Ascending aorta (tissue), 2 donors: ENCODE measurements at regions of chr9 and their contacts with region 1.

Region 1: GRCh38 chr9:121650217-121651007 is 1.0 kb upstream of the DAB2IP start:
- DNase-seq: no peak
- H3K4me3 ChIP-seq: peak overlapping the region in 1 of 2 donors; percentile 88
- H3K27ac ChIP-seq: peak overlapping the region; percentile 16 to 56
- H3K4me1 ChIP-seq: peaks cover 15 to 17% of the 10 kb centered on the region in 2 donors
- H3K27me3 ChIP-seq: no peaks in the 10 kb centered on the region
- CTCF ChIP-seq: no peak

Region 2: GRCh38 chr9:121566481-121567465 is 83.6 kb before region 1 on chr9:
- intact Hi-C with region 1: loop called (anchors 5 kb)
- DNase-seq: peak in 1 of 2 donors; percentile 78
- H3K4me3 ChIP-seq: peak overlapping the region; percentile 36 to 67
- H3K27ac ChIP-seq: peak overlapping the region; percentile 68 to 87
- H3K4me1 ChIP-seq: peaks cover 21 to 35% of the 10 kb centered on the region in 2 donors
- H3K27me3 ChIP-seq: no peaks in the 10 kb centered on the region
- CTCF ChIP-seq: no peak

Region 3: DNA sequence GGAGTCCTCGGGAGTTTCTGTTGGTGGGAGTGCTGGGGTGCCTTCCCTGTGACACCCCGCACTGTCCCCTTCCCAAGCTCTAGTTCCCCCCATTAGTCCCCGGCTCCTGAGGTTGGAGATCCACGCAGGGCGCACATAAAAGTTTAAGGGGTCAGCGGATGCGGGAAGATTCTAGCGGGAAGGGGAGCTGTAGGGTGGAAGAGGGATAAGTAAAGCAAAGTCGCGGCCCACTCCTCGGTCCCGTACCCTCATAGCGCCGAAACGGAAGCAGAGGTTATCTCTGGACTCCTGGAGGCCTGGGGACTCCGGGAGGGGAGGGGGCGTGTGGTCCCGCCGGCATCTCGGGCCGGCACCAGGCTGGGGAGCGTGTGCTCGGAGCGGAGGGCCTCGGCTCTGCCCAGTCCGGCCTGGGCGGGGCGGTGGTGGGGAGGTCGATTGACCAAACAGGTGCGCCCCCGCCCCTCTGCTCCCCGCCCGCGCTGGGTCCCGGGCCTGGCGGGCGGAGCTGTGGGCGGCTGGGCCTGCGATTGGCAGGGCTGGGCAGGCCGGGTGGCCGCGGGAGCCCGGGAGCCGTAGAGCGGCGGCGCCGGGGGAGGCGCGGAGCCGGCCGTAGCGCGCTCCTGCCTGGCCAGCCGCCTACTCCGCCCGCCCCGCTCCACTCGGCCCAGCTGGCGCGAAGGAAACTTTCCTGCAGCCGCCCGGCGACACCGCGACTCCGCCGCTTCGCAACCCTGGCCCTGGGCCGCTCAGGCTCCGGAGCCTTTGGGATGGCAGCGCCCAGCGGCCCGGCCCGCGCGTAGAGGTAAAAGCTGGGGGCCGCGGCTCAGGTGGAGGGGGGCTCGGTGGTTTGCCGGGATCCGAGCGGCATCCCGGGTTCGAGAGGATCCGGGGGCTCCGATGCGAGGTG is 51.2 kb before region 1 on chr9:
- intact Hi-C with region 1: loop called (anchors 2 kb)
- DNase-seq: peak; percentile 19 to 83
- H3K4me3 ChIP-seq: peak overlapping the region; percentile 74 to 87
- H3K27ac ChIP-seq: peak overlapping the region; percentile 47 to 78
- H3K4me1 ChIP-seq: peaks cover 0 to 24% of the 10 kb centered on the region in 2 donors
- H3K27me3 ChIP-seq: no peaks in the 10 kb centered on the region
- CTCF ChIP-seq: no peak

Region 4: GRCh38 chr9:121640076-121640475 is 10.3 kb before region 1 on chr9:
- intact Hi-C with region 1: no loop called
- DNase-seq: no peak
- H3K4me3 ChIP-seq: no peak overlapping the region
- H3K27ac ChIP-seq: no peak overlapping the region
- H3K4me1 ChIP-seq: peaks cover 0 to 16% of the 10 kb centered on the region in 2 donors
- H3K27me3 ChIP-seq: no peaks in the 10 kb centered on the region
- CTCF ChIP-seq: peak; percentile 12 to 57 (median 33)